ENCODE measurements at regions of chr5 and their contacts with region 1.

Region 1: DNA sequence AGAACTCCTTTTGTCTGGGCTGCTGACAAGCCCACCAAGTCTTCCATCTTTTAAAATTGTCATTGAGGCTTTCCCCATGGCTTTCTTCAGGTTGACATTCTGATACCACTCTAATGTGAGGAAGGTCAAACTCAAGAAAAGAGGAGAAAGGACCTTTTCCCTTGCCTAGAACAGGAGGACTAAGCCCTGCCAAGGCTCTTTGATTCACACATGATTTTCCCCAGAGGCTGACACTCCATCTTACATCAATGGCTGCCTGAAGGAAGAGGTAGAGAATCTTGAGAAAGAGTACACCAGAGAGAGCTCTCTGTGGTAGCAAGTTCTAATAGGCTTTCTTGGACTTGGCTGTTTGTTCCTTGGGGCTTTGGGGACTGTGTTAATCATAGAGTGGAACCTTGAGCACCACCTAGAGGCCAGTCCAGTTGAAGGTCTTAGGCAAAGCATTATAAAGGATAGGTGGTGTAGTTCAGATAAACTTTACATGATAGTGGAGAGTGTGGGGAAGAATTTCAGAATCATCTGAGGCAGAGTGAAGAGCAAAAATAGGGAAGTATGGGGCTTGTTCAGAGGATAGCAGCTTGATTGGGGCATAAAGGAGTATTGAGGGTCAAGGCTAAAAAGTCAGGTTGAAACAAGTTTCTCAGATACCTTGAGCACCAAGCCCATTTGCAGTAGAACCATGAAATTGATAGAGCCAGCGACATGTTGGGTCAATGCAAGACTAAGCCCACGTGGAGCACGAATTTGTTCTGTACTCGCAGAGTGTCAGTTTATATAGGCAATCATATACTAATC is 36.7 kb downstream of the NDFIP1 start:
- DNase-seq: no peak
- ATAC-seq: peak; percentile 86 to 89
- H3K4me3 ChIP-seq: no peak overlapping the region
- H3K27ac ChIP-seq: peak overlapping the region; percentile 14
- H3K4me1 ChIP-seq: no peaks in the 10 kb centered on the region
- H3K27me3 ChIP-seq: no peaks in the 10 kb centered on the region
- CTCF ChIP-seq: peak; percentile 74

Region 2: DNA sequence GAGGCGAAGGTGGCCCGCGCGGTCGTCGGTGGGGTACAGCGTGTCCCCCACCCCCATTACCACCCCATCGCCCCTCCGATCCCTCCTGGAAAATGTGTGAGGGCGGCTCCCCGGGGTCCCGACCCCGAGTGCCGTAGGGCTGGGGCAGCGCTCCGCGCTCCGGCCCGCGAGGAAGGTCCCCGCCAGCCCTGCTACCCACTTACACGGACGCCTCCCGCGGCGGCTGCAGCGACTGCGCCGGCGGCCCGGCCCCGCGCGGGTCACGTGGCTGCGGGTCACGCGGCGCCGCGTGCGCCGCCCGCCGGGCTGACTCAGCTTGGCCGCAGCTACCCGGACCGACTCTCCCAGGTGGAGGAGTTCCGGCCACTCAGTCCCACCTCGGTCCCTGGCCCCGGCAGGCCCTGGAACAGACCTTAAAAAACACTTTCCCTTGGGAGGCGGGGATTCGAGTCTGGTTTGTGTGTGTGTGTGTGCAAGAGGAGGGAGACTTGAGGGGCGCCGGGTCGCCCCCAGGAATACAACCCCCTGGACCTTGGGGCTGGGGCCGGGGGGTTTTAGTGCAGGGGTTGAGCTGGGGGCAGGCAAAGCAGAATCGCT is 132.4 kb before region 1 on chr5 and contains the start of gene GNPDA1:
- intact Hi-C with region 1: loop called (anchors 10 kb)
- DNase-seq: peak; percentile 90
- ATAC-seq: peak; percentile 92 to 96
- H3K4me3 ChIP-seq: peak within 1 kb of the TSS; percentile 78
- H3K27ac ChIP-seq: peak within 1 kb of the TSS; percentile 90
- H3K4me1 ChIP-seq: peaks cover 36% of the 10 kb centered on the region
- H3K27me3 ChIP-seq: no peaks in the 10 kb centered on the region
- CTCF ChIP-seq: no peak
- total RNA-seq, gene GNPDA1: 38.3 TPM